IMR-90 (cell line): ENCODE measurements at regions of chr6 and their contacts with region 1.

Region 1: GRCh38 chr6:27188885-27189418 is 58.5 kb upstream of the PRSS16 start:
- DNase-seq: peak; percentile 83
- ATAC-seq: peak; percentile 88
- H3K4me3 ChIP-seq: peak overlapping the region; percentile 66
- H3K27ac ChIP-seq: peak overlapping the region; percentile 88
- H3K4me1 ChIP-seq: peaks cover 1% of the 10 kb centered on the region; the same call in 1 of the 2 replicates
- H3K27me3 ChIP-seq: no peaks in the 10 kb centered on the region
- CTCF ChIP-seq: peak; percentile 78
- POLR2A ChIP-seq: no peak
- RAD21 ChIP-seq: peak; percentile 83

Region 2: GRCh38 chr6:26640806-26641205 is 548.1 kb before region 1 on chr6:
- CTCF ChIA-PET with region 1: no interaction called
- POLR2A ChIA-PET with region 1: no interaction called
- dilution Hi-C with region 1: no loop called
- in situ Hi-C with region 1: no loop called
- intact Hi-C with region 1: no loop called
- DNase-seq: no peak
- ATAC-seq: no peak
- H3K4me3 ChIP-seq: no peak overlapping the region
- H3K27ac ChIP-seq: no peak overlapping the region
- H3K4me1 ChIP-seq: no peaks in the 10 kb centered on the region
- H3K27me3 ChIP-seq: no peaks in the 10 kb centered on the region
- CTCF ChIP-seq: no peak
- POLR2A ChIP-seq: no peak
- RAD21 ChIP-seq: no peak

Region 3: GRCh38 chr6:26659042-26659999 is 529.6 kb before region 1 on chr6 and contains the start of gene ZNF322:
- CTCF ChIA-PET with region 1: no interaction called
- POLR2A ChIA-PET with region 1: no interaction called
- dilution Hi-C with region 1: no loop called
- in situ Hi-C with region 1: no loop called
- intact Hi-C with region 1: no loop called
- DNase-seq: peak; percentile 90
- ATAC-seq: peak; percentile 99
- H3K4me3 ChIP-seq: peak within 1 kb of the TSS; percentile 87
- H3K27ac ChIP-seq: peak within 1 kb of the TSS; percentile 94
- H3K4me1 ChIP-seq: 0 out of 2 replicates have a peak, but pooled peaks cover 2% of the 10 kb centered on the region
- H3K27me3 ChIP-seq: no peaks in the 10 kb centered on the region
- CTCF ChIP-seq: no peak
- POLR2A ChIP-seq: peak; percentile 68; the same call in 1 of the 2 replicates
- RAD21 ChIP-seq: no peak
- total RNA-seq, gene ZNF322: 18.9 and 23.3 TPM in 2 replicates

Region 4: GRCh38 chr6:27146706-27147505 is 42.0 kb before region 1 on chr6:
- CTCF ChIA-PET with region 1: interaction called, 3 read pairs
- POLR2A ChIA-PET with region 1: interaction called, 22 read pairs
- dilution Hi-C with region 1: no loop called
- in situ Hi-C with region 1: no loop called
- intact Hi-C with region 1: no loop called
- DNase-seq: peak; percentile 100
- ATAC-seq: peak; percentile 90
- H3K4me3 ChIP-seq: peak overlapping the region; percentile 85
- H3K27ac ChIP-seq: peak overlapping the region; percentile 96
- H3K4me1 ChIP-seq: peaks cover 2% of the 10 kb centered on the region; the same call in 1 of the 2 replicates
- H3K27me3 ChIP-seq: no peaks in the 10 kb centered on the region
- CTCF ChIP-seq: no peak
- POLR2A ChIP-seq: peak; percentile 95
- RAD21 ChIP-seq: no peak

Region 5: GRCh38 chr6:27479319-27480182 is 290.6 kb after region 1 on chr6:
- CTCF ChIA-PET with region 1: no interaction called
- POLR2A ChIA-PET with region 1: no interaction called
- dilution Hi-C with region 1: no loop called
- in situ Hi-C with region 1: no loop called
- intact Hi-C with region 1: loop called (anchors 2 kb)
- DNase-seq: peak; percentile 96
- ATAC-seq: peak; percentile 78
- H3K4me3 ChIP-seq: peak overlapping the region; percentile 54
- H3K27ac ChIP-seq: peak overlapping the region; percentile 85
- H3K4me1 ChIP-seq: no peaks in the 10 kb centered on the region
- H3K27me3 ChIP-seq: no peaks in the 10 kb centered on the region
- CTCF ChIP-seq: no peak
- POLR2A ChIP-seq: 0 out of 2 replicates have a peak, but pooled peaks have one; percentile 49
- RAD21 ChIP-seq: no peak

Region 6: DNA sequence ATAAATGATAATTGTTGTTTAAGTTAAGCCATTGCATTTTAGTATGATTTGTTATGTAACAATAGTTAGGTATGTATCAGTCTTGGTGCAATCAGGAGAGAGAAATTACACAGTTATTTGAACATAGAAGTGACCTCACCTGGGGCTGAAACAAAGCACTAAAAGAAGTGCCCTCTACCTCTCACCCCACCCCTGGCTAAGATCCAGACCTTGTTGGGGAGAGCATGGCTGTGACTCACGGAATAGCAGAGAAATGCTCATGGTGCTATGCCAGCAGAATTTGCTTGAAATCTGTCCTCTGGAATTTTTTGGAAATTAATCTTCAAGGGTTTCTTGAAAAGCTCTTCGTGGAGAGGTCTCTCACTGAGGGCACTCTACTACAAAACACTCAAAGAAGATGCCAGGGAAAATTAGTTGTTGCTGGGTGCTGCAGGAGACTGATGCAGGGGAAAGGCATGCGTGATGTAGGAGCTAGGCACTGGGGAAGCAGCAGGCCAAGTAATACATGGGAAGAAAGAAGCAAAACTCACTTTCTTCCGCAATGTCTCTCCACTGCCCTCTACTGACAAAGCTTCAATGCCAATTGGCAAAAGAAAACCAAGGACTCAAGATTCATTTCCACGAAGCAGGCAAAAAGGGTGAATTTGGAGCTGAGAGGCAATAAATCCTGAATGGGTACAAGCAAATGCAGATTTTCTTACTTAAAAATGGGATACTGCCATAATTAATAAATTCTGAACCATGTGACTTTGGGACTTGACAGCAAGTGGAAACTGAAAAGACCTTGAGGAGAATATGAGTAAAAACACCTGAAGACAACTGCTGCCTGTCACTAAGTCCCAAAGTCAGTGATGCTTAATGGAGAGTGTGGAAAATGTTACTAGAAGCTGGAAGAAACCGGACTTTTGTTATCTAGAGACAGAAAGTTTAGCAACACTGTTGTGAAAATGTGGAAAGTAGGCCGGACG is 420.2 kb after region 1 on chr6:
- CTCF ChIA-PET with region 1: no interaction called
- POLR2A ChIA-PET with region 1: no interaction called
- dilution Hi-C with region 1: no loop called
- in situ Hi-C with region 1: no loop called
- intact Hi-C with region 1: loop called (anchors 5 kb)
- DNase-seq: peak; percentile 60
- ATAC-seq: peak; percentile 52; the same call in 1 of the 2 replicates
- H3K4me3 ChIP-seq: no peak overlapping the region
- H3K27ac ChIP-seq: no peak overlapping the region
- H3K4me1 ChIP-seq: no peaks in the 10 kb centered on the region
- H3K27me3 ChIP-seq: no peaks in the 10 kb centered on the region
- CTCF ChIP-seq: peak; percentile 52
- POLR2A ChIP-seq: no peak
- RAD21 ChIP-seq: peak; percentile 45; the same call in 1 of the 2 replicates

Region 7: GRCh38 chr6:27772261-27773001 is 583.5 kb after region 1 on chr6:
- CTCF ChIA-PET with region 1: no interaction called
- POLR2A ChIA-PET with region 1: no interaction called
- dilution Hi-C with region 1: no loop called
- in situ Hi-C with region 1: no loop called
- intact Hi-C with region 1: loop called (anchors 1 kb)
- DNase-seq: peak; percentile 77
- ATAC-seq: peak; percentile 100
- H3K4me3 ChIP-seq: no peak overlapping the region
- H3K27ac ChIP-seq: no peak overlapping the region
- H3K4me1 ChIP-seq: no peaks in the 10 kb centered on the region
- H3K27me3 ChIP-seq: peaks cover 4% of the 10 kb centered on the region; the same call in 1 of the 2 replicates
- CTCF ChIP-seq: peak; percentile 91
- POLR2A ChIP-seq: no peak
- RAD21 ChIP-seq: peak; percentile 72